Activated CD8-positive, alpha-beta T cell treated with anti-CD3 and anti-CD28 coated beads for 36 hours (primary cell): ENCODE measurements at regions of chr2 and their contacts with region 1.

Region 1: DNA sequence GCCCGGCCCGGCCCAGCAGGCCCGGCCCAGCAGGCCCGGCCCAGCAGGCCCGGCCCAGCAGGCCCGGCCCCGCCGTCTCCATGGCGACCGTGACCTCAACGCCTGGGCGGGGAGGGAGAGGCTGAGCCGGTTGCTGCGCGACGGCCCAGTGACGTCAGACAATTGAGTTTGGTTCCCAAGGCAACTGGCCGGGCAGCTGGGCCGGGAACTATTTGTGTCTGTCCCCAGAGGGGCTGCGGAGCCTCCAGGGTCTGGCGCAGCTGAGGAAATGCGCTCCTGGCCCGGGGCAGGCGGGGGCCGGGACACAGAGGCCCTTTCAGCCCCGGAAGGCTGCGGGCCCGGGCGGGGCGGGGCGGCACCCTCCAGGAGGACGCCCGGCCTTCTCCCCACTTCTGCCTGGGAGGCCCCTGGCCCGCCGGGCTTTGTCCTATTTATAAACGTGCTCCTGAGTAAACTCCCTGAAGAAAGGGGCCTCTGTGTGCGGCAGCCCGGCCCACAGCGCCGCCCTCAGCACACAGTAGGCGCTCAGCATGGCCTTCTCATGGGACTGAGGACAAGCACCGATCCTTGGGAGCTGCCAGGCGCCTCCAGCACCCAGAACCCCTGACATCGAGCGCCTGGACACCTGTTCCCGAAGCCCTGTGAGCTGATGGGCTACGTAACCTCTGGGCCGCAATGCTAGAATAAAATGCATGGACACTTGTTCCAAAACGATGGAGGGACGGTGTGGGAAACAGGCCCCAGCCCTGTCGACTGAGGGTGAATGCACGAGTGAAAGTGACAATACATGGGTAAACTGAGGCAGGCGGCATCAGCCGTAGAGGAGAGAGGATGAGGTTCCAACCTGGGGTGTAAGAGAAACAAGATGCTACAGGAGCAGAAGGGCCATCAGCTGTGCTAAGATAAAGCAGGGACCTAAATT is 12.3 kb downstream of the TEX44 start:
- DNase-seq: peak; percentile 96
- ATAC-seq: peak; percentile 77
- H3K4me3 Mint-ChIP-seq: peak overlapping the region; percentile 50
- H3K27ac Mint-ChIP-seq: no peak overlapping the region
- H3K4me1 Mint-ChIP-seq: peaks cover 14% of the 10 kb centered on the region
- H3K27me3 Mint-ChIP-seq: peaks cover 4% of the 10 kb centered on the region
- CTCF ChIP-seq: no peak

Region 2: GRCh38 chr2:230781130-230781797 is 823.7 kb before region 1 on chr2:
- CTCF ChIA-PET with region 1: no interaction called
- POLR2A ChIA-PET with region 1: no interaction called
- intact Hi-C with region 1: no loop called
- DNase-seq: peak; percentile 78
- ATAC-seq: peak; percentile 89
- H3K4me3 Mint-ChIP-seq: no peak overlapping the region
- H3K27ac Mint-ChIP-seq: peak overlapping the region; percentile 65
- H3K4me1 Mint-ChIP-seq: peaks cover 79% of the 10 kb centered on the region
- H3K27me3 Mint-ChIP-seq: no peaks in the 10 kb centered on the region
- CTCF ChIP-seq: no peak

Region 3: DNA sequence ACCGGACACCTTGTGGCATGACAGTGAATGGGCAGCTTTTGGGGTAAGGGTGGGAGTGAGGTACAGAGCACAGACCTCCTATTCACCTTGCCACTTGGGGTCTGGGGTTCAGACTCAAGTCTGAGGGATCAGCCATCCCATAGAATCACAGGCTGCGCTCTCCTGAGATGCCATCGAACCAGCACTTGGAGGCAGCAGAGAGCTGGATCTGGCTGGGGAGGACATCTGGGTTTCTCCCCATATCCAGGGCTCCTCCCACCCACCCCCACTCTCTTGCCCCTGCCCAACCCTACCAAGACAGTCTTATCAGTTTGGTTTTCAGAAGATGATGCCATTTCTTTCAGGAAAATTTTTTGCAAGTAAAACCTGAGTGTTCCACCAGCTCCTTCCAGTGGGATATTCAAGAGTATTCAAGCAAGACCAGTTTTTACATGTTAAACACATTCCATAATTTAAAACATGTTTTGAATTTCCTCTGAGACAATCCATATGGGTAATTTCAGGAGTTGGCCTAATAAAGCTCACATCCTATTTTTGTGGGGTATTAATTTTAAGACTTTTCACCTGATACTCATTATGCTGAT is 41.5 kb before region 1 on chr2:
- CTCF ChIA-PET with region 1: interaction called, 22 read pairs
- POLR2A ChIA-PET with region 1: no interaction called
- intact Hi-C with region 1: loop called (anchors 5 kb)
- DNase-seq: peak; percentile 66
- ATAC-seq: peak; percentile 99
- H3K4me3 Mint-ChIP-seq: no peak overlapping the region
- H3K27ac Mint-ChIP-seq: no peak overlapping the region
- H3K4me1 Mint-ChIP-seq: peaks cover under 1% of the 10 kb centered on the region
- H3K27me3 Mint-ChIP-seq: no peaks in the 10 kb centered on the region
- CTCF ChIP-seq: peak; percentile 71

Region 4: GRCh38 chr2:231583982-231584381 is 21.0 kb before region 1 on chr2:
- CTCF ChIA-PET with region 1: interaction called, 50 read pairs
- POLR2A ChIA-PET with region 1: no interaction called
- intact Hi-C with region 1: no loop called
- DNase-seq: no peak
- ATAC-seq: no peak
- H3K4me3 Mint-ChIP-seq: no peak overlapping the region
- H3K27ac Mint-ChIP-seq: no peak overlapping the region
- H3K4me1 Mint-ChIP-seq: no peaks in the 10 kb centered on the region
- H3K27me3 Mint-ChIP-seq: peaks cover 3% of the 10 kb centered on the region
- CTCF ChIP-seq: no peak

Region 5: GRCh38 chr2:231590619-231591018 is 14.3 kb before region 1 on chr2:
- CTCF ChIA-PET with region 1: interaction called, 50 read pairs
- POLR2A ChIA-PET with region 1: no interaction called
- intact Hi-C with region 1: no loop called
- DNase-seq: no peak
- ATAC-seq: no peak
- H3K4me3 Mint-ChIP-seq: no peak overlapping the region
- H3K27ac Mint-ChIP-seq: no peak overlapping the region
- H3K4me1 Mint-ChIP-seq: no peaks in the 10 kb centered on the region
- H3K27me3 Mint-ChIP-seq: no peaks in the 10 kb centered on the region
- CTCF ChIP-seq: no peak